Endothelial cell of umbilical vein (primary cell): ENCODE measurements at regions of chr20 and their contacts with region 1.

Region 1: GRCh38 chr20:51306503-51307358 is 235.8 kb downstream of the NFATC2 start:
- DNase-seq: peak; percentile 63
- H3K4me3 ChIP-seq: no peak overlapping the region
- H3K27ac ChIP-seq: no peak overlapping the region
- H3K4me1 ChIP-seq: no peaks in the 10 kb centered on the region
- H3K27me3 ChIP-seq: peaks cover 0 to 3% of the 10 kb centered on the region in 2 experiments
- CTCF ChIP-seq: peak; percentile 91 to 96
- POLR2A ChIP-seq: no peak

Region 2: GRCh38 chr20:50980851-50981713 is 325.6 kb before region 1 on chr20:
- CTCF ChIA-PET with region 1: interaction called, 311 read pairs
- POLR2A ChIA-PET with region 1: no interaction called
- dilution Hi-C with region 1: no loop called
- intact Hi-C with region 1: no loop called
- DNase-seq: peak; percentile 58
- H3K4me3 ChIP-seq: no peak overlapping the region
- H3K27ac ChIP-seq: no peak overlapping the region
- H3K4me1 ChIP-seq: no peaks in the 10 kb centered on the region
- H3K27me3 ChIP-seq: peaks cover 2 to 3% of the 10 kb centered on the region in 2 experiments
- CTCF ChIP-seq: peak; percentile 84 to 88
- POLR2A ChIP-seq: no peak

Region 3: GRCh38 chr20:50992733-50993457 is 313.8 kb before region 1 on chr20:
- CTCF ChIA-PET with region 1: interaction called, 311 read pairs
- POLR2A ChIA-PET with region 1: no interaction called
- dilution Hi-C with region 1: no loop called
- intact Hi-C with region 1: loop called (anchors 1 kb)
- DNase-seq: peak; percentile 69
- H3K4me3 ChIP-seq: no peak overlapping the region
- H3K27ac ChIP-seq: no peak overlapping the region
- H3K4me1 ChIP-seq: no peaks in the 10 kb centered on the region
- H3K27me3 ChIP-seq: peaks cover 4 to 6% of the 10 kb centered on the region in 2 experiments
- CTCF ChIP-seq: peak; percentile 59 to 67
- POLR2A ChIP-seq: no peak

Region 4: DNA sequence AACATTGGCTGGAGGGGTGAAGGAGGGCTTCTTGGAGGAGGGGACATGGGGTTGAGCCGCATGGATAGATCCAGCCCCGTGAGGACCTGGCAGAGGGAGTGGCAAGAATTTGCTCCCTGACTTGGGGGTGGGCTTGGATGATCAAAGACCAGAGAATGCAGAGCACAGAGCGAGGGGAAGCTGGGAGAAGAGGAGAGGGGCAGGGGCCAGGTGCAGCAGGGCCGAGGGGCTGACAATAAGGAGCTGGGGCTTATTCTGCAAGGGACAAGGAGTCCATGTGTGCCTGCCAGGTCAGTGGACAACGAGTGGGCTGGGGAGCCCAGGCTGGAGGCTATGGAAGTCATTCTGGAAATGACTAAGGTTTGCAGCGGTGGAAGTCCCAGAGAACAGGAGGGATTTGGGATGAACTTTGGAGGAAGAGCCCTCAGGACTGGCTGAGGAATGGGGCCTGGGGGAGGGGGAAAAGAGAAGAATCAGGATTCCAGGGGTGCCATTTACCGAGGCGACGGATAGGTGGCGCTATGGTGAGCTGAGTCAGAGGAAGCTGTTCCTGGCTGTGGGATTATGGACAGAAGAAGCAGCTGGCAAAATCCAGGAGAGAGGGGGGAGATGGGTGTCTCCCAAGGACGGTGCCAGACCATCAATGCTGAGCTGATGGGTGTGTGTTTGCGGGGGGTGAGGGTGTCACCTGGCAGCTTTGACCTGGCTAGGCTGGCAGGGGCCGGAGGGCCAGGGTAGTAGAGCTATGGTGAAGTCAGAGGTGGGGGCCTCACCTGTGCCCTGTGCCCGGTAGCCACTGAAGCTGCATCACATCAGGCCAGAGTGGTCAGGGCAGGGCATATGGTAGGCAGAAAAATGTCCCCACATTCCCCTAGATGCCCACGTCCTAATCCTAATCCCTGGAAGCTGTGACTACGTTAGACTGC is 291.7 kb before region 1 on chr20:
- CTCF ChIA-PET with region 1: interaction called, 50 read pairs
- POLR2A ChIA-PET with region 1: no interaction called
- dilution Hi-C with region 1: no loop called
- intact Hi-C with region 1: loop called (anchors 1 kb)
- DNase-seq: peak; percentile 49
- H3K4me3 ChIP-seq: no peak overlapping the region
- H3K27ac ChIP-seq: no peak overlapping the region
- H3K4me1 ChIP-seq: no peaks in the 10 kb centered on the region
- H3K27me3 ChIP-seq: peaks cover 3 to 12% of the 10 kb centered on the region in 2 experiments
- CTCF ChIP-seq: peak; percentile 77 to 79
- POLR2A ChIP-seq: no peak

Region 5: DNA sequence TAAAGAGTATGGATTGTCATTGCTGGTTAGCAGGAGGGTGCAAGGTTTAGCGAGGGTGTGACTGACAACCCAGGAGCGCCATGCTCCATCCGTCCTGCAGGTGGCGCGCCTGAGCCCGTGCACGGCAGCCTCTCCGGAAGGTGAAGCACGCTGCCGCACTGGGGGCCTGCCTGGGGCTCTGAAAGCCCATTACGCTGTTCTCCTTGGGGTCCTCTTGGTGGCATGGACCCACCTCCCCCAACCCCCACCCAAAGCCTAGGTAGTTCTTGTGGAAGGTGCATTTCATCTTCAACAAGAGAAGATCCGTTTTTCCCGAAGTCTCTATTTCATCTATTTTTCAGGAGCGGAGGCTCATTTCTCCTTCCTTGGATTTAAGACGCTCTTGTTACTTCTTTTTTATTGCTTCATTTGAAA is 86.4 kb before region 1 on chr20:
- CTCF ChIA-PET with region 1: interaction called, 34 read pairs
- POLR2A ChIA-PET with region 1: no interaction called
- dilution Hi-C with region 1: no loop called
- intact Hi-C with region 1: loop called (anchors 1 kb)
- DNase-seq: peak; percentile 31
- H3K4me3 ChIP-seq: no peak overlapping the region
- H3K27ac ChIP-seq: no peak overlapping the region
- H3K4me1 ChIP-seq: no peaks in the 10 kb centered on the region
- H3K27me3 ChIP-seq: peaks cover 12 to 25% of the 10 kb centered on the region in 2 experiments
- CTCF ChIP-seq: peak; percentile 94 to 99
- POLR2A ChIP-seq: no peak

Region 6: GRCh38 chr20:51318058-51318895 is 11.5 kb after region 1 on chr20:
- CTCF ChIA-PET with region 1: interaction called, 12 read pairs
- POLR2A ChIA-PET with region 1: no interaction called
- dilution Hi-C with region 1: no loop called
- intact Hi-C with region 1: no loop called
- DNase-seq: peak; percentile 12
- H3K4me3 ChIP-seq: no peak overlapping the region
- H3K27ac ChIP-seq: no peak overlapping the region
- H3K4me1 ChIP-seq: no peaks in the 10 kb centered on the region
- H3K27me3 ChIP-seq: no peaks in the 10 kb centered on the region
- CTCF ChIP-seq: peak; percentile 66 to 79
- POLR2A ChIP-seq: no peak